Activated CD8-positive, alpha-beta T cell treated with anti-CD3 and anti-CD28 coated beads for 36 hours (primary cell): ENCODE measurements at regions of chr4 and their contacts with region 1.

Region 1: GRCh38 chr4:108650212-108651013 is at the start of gene OSTC:
- DNase-seq: peak; percentile 94
- ATAC-seq: peak; percentile 95
- H3K4me3 Mint-ChIP-seq: peak within 1 kb of the TSS; percentile 98
- H3K27ac Mint-ChIP-seq: peak within 1 kb of the TSS; percentile 95
- H3K4me1 Mint-ChIP-seq: peaks cover 29% of the 10 kb centered on the region
- H3K27me3 Mint-ChIP-seq: no peaks in the 10 kb centered on the region
- CTCF ChIP-seq: no peak
- total RNA-seq, gene OSTC: 75.7 to 80.0 TPM

Region 2: GRCh38 chr4:108620101-108620932 is 30.1 kb before region 1 on chr4 and contains the start of gene RPL34:
- CTCF ChIA-PET with region 1: interaction called, 3 read pairs
- POLR2A ChIA-PET with region 1: interaction called, 26 read pairs
- intact Hi-C with region 1: no loop called
- DNase-seq: peak; percentile 99
- ATAC-seq: peak; percentile 97
- H3K4me3 Mint-ChIP-seq: peak within 1 kb of the TSS; percentile 85
- H3K27ac Mint-ChIP-seq: peak within 1 kb of the TSS; percentile 97
- H3K4me1 Mint-ChIP-seq: peaks cover 41% of the 10 kb centered on the region
- H3K27me3 Mint-ChIP-seq: no peaks in the 10 kb centered on the region
- CTCF ChIP-seq: no peak
- total RNA-seq, gene RPL34: 1,848 to 1,919 TPM

Region 3: DNA sequence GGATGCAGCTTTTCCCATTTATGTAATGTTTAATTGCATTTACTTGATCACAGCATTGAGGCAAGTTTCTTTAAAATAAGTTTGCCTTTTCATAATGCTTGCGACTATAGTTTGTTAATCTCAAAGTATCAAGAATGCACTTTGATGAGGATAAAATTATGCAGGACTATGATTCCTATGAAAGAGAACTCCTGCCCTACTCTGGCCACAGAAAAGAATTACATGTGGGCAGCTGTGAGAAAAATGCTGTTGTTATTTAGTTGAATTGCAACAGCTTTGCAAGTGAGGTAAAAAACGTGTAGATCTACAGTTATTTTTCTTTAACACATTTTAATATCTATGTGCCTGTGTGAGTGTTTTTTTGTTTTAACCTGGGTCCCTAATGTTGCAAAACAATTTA is 12.6 kb before region 1 on chr4:
- CTCF ChIA-PET with region 1: interaction called, 11 read pairs
- POLR2A ChIA-PET with region 1: interaction called, 7 read pairs
- intact Hi-C with region 1: no loop called
- DNase-seq: no peak
- ATAC-seq: no peak
- H3K4me3 Mint-ChIP-seq: no peak overlapping the region
- H3K27ac Mint-ChIP-seq: no peak overlapping the region
- H3K4me1 Mint-ChIP-seq: no peaks in the 10 kb centered on the region
- H3K27me3 Mint-ChIP-seq: no peaks in the 10 kb centered on the region
- CTCF ChIP-seq: no peak